ENCODE measurements at regions of chr3 and their contacts with region 1.

Region 1: DNA sequence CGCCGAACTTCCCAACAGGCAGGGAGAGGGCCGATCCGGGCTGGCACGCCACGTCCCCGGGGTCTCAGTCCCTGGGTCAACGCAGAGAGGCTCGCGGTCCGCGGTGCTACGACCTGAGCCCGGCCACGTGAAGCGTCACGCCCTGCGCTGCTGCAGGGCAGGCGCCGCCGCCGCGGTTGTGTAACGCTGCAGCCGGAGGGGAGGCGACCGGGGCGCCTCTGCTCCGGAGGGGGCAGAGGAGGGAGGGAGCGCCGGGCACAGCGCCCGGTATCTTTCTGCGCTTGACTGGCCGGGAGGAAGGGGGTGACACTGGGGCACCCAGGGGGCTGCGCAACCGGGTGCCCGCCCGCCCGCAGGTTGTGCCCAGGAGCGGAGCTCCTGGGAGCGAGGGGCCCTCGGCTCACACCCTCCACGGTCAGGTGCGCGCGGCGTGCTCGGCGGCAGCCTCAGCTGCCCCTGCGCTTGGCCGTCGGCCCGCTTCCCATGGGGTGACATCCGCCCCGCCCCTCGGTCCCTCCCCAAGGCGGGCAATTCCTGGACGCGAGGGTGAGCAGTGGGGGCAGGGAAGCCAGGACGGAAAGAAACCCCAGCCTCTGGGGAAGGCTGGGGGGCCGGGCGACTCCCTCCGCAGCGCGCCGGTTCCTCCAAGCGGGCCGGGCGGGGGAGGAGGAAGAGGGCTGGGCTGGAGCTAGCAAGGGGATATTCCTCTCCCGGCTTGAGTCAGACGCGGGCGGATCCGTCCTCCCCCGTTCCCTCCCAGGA is 852 bp upstream of the BHLHE40 start:
- H3K4me3 ChIP-seq: peak overlapping the region; percentile 62
- H3K27ac ChIP-seq: peak overlapping the region; percentile 99
- H3K4me1 ChIP-seq: peaks cover 7% of the 10 kb centered on the region
- CTCF ChIP-seq: peak; percentile 71; the same call in 1 of the 2 replicates

Region 2: GRCh38 chr3:4665197-4665596 is 313.2 kb before region 1 on chr3:
- CTCF ChIA-PET with region 1: no interaction called
- POLR2A ChIA-PET with region 1: no interaction called
- H3K4me3 ChIP-seq: no peak overlapping the region
- H3K27ac ChIP-seq: no peak overlapping the region
- H3K4me1 ChIP-seq: no peaks in the 10 kb centered on the region
- CTCF ChIP-seq: no peak

Region 3: GRCh38 chr3:4712143-4712542 is 266.2 kb before region 1 on chr3:
- CTCF ChIA-PET with region 1: interaction called, 94 read pairs
- POLR2A ChIA-PET with region 1: interaction called, 10 read pairs
- H3K4me3 ChIP-seq: no peak overlapping the region
- H3K27ac ChIP-seq: no peak overlapping the region
- H3K4me1 ChIP-seq: no peaks in the 10 kb centered on the region
- CTCF ChIP-seq: no peak

Region 4: GRCh38 chr3:4729061-4729973 is 249.1 kb before region 1 on chr3:
- CTCF ChIA-PET with region 1: interaction called, 10 read pairs
- POLR2A ChIA-PET with region 1: interaction called, 7 read pairs
- H3K4me3 ChIP-seq: no peak overlapping the region
- H3K27ac ChIP-seq: no peak overlapping the region
- H3K4me1 ChIP-seq: peaks cover 13% of the 10 kb centered on the region
- CTCF ChIP-seq: no peak

Region 5: GRCh38 chr3:4898454-4899313 is 79.7 kb before region 1 on chr3:
- CTCF ChIA-PET with region 1: interaction called, 13 read pairs
- POLR2A ChIA-PET with region 1: interaction called, 6 read pairs
- H3K4me3 ChIP-seq: no peak overlapping the region
- H3K27ac ChIP-seq: no peak overlapping the region
- H3K4me1 ChIP-seq: peaks cover 3% of the 10 kb centered on the region; the same call in 1 of the 2 replicates
- CTCF ChIP-seq: no peak

Region 6: DNA sequence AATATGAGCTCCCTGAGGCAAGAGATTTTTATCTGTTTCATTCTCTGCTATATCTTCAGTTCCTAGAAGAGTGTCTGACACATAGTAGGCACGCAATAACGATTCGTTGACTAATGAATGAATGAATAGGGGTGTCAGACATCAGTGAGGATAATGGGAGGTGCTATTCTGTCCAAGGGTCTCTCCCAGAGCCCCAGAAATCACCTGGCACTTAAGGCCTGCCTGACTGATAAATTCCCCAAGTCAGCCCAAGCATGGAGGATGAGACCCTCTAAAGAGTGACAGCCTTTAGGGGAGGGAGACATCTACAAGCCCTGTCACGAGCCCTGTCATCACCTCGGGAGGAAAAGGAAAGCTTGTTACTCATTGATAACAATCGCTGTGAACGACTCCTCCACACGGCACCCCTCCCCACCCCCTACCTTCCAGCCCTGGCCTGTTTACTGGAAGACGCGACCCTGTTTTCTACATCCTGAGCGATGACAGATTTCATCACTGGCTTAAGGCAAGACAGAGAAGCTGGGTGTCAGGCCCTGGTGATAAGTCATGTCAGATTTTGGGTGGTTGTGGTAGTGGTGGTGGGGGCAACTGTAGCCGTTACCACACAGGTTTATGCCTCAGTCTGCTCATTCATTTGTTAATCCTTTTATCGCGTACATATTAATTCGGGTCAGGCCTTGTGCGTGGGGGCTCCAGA is 23.9 kb after region 1 on chr3:
- CTCF ChIA-PET with region 1: interaction called, 8 read pairs
- POLR2A ChIA-PET with region 1: interaction called, 20 read pairs
- H3K4me3 ChIP-seq: no peak overlapping the region
- H3K27ac ChIP-seq: peak overlapping the region; percentile 43
- H3K4me1 ChIP-seq: peaks cover 17% of the 10 kb centered on the region
- CTCF ChIP-seq: no peak

Region 7: GRCh38 chr3:5026331-5027218 is 48.2 kb after region 1 on chr3:
- CTCF ChIA-PET with region 1: interaction called, 46 read pairs
- POLR2A ChIA-PET with region 1: interaction called, 332 read pairs
- H3K4me3 ChIP-seq: peak overlapping the region; percentile 36
- H3K27ac ChIP-seq: peak overlapping the region; percentile 90
- H3K4me1 ChIP-seq: no peaks in the 10 kb centered on the region; the same call in 1 of the 2 replicates
- CTCF ChIP-seq: peak; percentile 82; the same call in 1 of the 2 replicates

Measured in HEK293 (cell line).